GM12878 (cell line): ENCODE measurements at regions of chr7 and their contacts with region 1.

Region 1: GRCh38 chr7:139075031-139075652 is 34.4 kb downstream of the ZC3HAV1 start:
- DNase-seq: peak; percentile 45
- ATAC-seq: peak; percentile 98
- H3K4me3 ChIP-seq: no peak overlapping the region
- H3K27ac ChIP-seq: no peak overlapping the region; the same call in 1 of the 2 replicates
- H3K4me1 ChIP-seq: peaks cover 7% of the 10 kb centered on the region; the same call in 1 of the 2 replicates
- H3K27me3 ChIP-seq: no peaks in the 10 kb centered on the region
- CTCF ChIP-seq: peak; percentile 68 to 85 (median 79)
- EP300 ChIP-seq: no peak
- POLR2A ChIP-seq: no peak
- RAD21 ChIP-seq: peak; percentile 72

Region 2: GRCh38 chr7:138886501-138886917 is 188.6 kb before region 1 on chr7:
- CTCF ChIA-PET with region 1: interaction called, 57 read pairs
- POLR2A ChIA-PET with region 1: no interaction called
- RAD21 ChIA-PET with region 1: interaction called, 41 read pairs
- SMC1A ChIA-PET with region 1: interaction called, 17 read pairs
- in situ Hi-C with region 1: loop called (anchors 5 kb)
- intact Hi-C with region 1: loop called (anchors 1 kb)
- DNase-seq: peak; percentile 42
- ATAC-seq: peak; percentile 95
- H3K4me3 ChIP-seq: no peak overlapping the region
- H3K27ac ChIP-seq: peak overlapping the region; percentile 18; the same call in 1 of the 2 replicates
- H3K4me1 ChIP-seq: no peaks in the 10 kb centered on the region
- H3K27me3 ChIP-seq: no peaks in the 10 kb centered on the region
- CTCF ChIP-seq: peak; percentile 60 to 78 (median 73)
- EP300 ChIP-seq: no peak
- POLR2A ChIP-seq: no peak
- RAD21 ChIP-seq: peak; percentile 66

Region 3: GRCh38 chr7:139023076-139023475 is 52.1 kb before region 1 on chr7:
- CTCF ChIA-PET with region 1: interaction called, 57 read pairs
- POLR2A ChIA-PET with region 1: no interaction called
- RAD21 ChIA-PET with region 1: interaction called, 27 read pairs
- SMC1A ChIA-PET with region 1: interaction called, 15 read pairs
- in situ Hi-C with region 1: no loop called
- intact Hi-C with region 1: no loop called
- DNase-seq: no peak
- ATAC-seq: no peak
- H3K4me3 ChIP-seq: no peak overlapping the region
- H3K27ac ChIP-seq: no peak overlapping the region
- H3K4me1 ChIP-seq: no peaks in the 10 kb centered on the region
- H3K27me3 ChIP-seq: no peaks in the 10 kb centered on the region
- CTCF ChIP-seq: no peak
- EP300 ChIP-seq: no peak
- POLR2A ChIP-seq: no peak
- RAD21 ChIP-seq: no peak

Region 4: DNA sequence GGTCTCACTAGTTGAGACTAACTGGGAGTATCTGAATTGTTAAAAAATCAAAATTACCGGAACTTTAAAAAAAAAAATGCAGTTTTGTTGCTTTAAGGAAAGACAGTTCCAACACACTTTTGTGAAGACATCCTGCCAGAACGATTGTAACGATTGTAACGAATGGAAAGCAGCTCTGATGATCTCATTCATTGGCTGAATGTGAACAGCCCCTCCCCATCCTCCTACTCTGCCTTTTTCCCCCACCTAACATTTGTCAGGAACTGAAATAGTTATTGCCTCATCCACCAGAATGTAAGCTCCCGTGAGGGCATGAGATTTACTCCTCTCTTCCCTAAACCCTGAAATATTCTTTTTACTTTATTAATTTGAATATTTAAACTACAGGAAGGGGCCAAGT is 16.2 kb before region 1 on chr7:
- CTCF ChIA-PET with region 1: interaction called, 20 read pairs
- POLR2A ChIA-PET with region 1: no interaction called
- RAD21 ChIA-PET with region 1: no interaction called
- SMC1A ChIA-PET with region 1: interaction called, 4 read pairs
- in situ Hi-C with region 1: no loop called
- intact Hi-C with region 1: no loop called
- DNase-seq: no peak
- ATAC-seq: no peak
- H3K4me3 ChIP-seq: no peak overlapping the region
- H3K27ac ChIP-seq: no peak overlapping the region
- H3K4me1 ChIP-seq: no peaks in the 10 kb centered on the region
- H3K27me3 ChIP-seq: no peaks in the 10 kb centered on the region
- CTCF ChIP-seq: no peak
- EP300 ChIP-seq: no peak
- POLR2A ChIP-seq: no peak
- RAD21 ChIP-seq: no peak

Region 5: GRCh38 chr7:139095194-139095659 is 20.1 kb after region 1 on chr7:
- CTCF ChIA-PET with region 1: interaction called, 34 read pairs
- POLR2A ChIA-PET with region 1: interaction called, 9 read pairs
- RAD21 ChIA-PET with region 1: interaction called, 6 read pairs
- SMC1A ChIA-PET with region 1: interaction called, 16 read pairs
- in situ Hi-C with region 1: no loop called
- intact Hi-C with region 1: no loop called
- DNase-seq: peak; percentile 88
- ATAC-seq: peak; percentile 99
- H3K4me3 ChIP-seq: peak overlapping the region; percentile 65
- H3K27ac ChIP-seq: peak overlapping the region; percentile 70
- H3K4me1 ChIP-seq: peaks cover 20% of the 10 kb centered on the region
- H3K27me3 ChIP-seq: no peaks in the 10 kb centered on the region
- CTCF ChIP-seq: 0 out of 6 replicates have a peak, but pooled peaks of 2 of the 3 experiments have one; percentile 2 to 5
- EP300 ChIP-seq: peak in 1 of 2 experiments; percentile 38; a peak in 1 of 4 replicates
- POLR2A ChIP-seq: peak; percentile 74
- RAD21 ChIP-seq: no peak

Region 6: DNA sequence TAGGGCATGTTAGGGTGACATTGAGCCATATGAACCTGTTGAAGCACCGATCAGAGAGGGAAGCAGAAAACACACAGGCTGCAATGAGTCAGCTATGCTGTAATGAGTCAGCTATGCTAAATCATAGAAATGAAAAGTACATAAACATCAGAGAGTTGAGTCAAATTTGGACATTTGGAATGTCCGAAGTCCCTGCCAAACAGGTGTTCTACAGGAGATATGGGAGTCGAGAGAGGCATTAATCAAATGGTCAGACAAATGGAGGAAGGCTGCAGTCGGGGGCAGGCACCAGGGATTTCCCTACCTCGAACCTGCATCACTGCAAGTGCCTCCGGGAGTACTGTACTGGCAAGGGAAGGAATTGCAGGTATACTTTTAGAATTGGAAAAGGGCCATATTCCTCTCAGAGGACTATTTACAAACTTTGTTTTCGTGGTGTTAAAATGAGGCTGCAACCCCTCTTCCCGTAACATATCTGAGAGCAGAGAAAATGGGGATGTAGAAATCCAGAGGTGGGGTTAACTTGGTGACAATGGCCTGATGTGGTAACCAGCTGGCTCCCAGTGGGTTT is 43.2 kb after region 1 on chr7:
- CTCF ChIA-PET with region 1: interaction called, 12 read pairs
- POLR2A ChIA-PET with region 1: no interaction called
- RAD21 ChIA-PET with region 1: interaction called, 3 read pairs
- SMC1A ChIA-PET with region 1: interaction called, 5 read pairs
- in situ Hi-C with region 1: no loop called
- intact Hi-C with region 1: no loop called
- DNase-seq: peak; percentile 80
- ATAC-seq: peak; percentile 83
- H3K4me3 ChIP-seq: peak overlapping the region; percentile 46; the same call in 1 of the 2 replicates
- H3K27ac ChIP-seq: peak overlapping the region; percentile 64
- H3K4me1 ChIP-seq: peaks cover 25% of the 10 kb centered on the region
- H3K27me3 ChIP-seq: no peaks in the 10 kb centered on the region
- CTCF ChIP-seq: peak in 2 of 3 experiments; percentile 17 to 27; a peak in 3 of 6 replicates
- EP300 ChIP-seq: peak; percentile 87 to 89; a peak in 2 of 4 replicates
- POLR2A ChIP-seq: no peak
- RAD21 ChIP-seq: no peak

Region 7: GRCh38 chr7:139169801-139170200 is 94.7 kb after region 1 on chr7:
- CTCF ChIA-PET with region 1: no interaction called
- POLR2A ChIA-PET with region 1: no interaction called
- RAD21 ChIA-PET with region 1: no interaction called
- SMC1A ChIA-PET with region 1: no interaction called
- in situ Hi-C with region 1: no loop called
- intact Hi-C with region 1: no loop called
- DNase-seq: no peak
- ATAC-seq: no peak
- H3K4me3 ChIP-seq: no peak overlapping the region
- H3K27ac ChIP-seq: no peak overlapping the region
- H3K4me1 ChIP-seq: no peaks in the 10 kb centered on the region
- H3K27me3 ChIP-seq: no peaks in the 10 kb centered on the region
- CTCF ChIP-seq: no peak
- EP300 ChIP-seq: no peak
- POLR2A ChIP-seq: no peak
- RAD21 ChIP-seq: no peak

Region 8: DNA sequence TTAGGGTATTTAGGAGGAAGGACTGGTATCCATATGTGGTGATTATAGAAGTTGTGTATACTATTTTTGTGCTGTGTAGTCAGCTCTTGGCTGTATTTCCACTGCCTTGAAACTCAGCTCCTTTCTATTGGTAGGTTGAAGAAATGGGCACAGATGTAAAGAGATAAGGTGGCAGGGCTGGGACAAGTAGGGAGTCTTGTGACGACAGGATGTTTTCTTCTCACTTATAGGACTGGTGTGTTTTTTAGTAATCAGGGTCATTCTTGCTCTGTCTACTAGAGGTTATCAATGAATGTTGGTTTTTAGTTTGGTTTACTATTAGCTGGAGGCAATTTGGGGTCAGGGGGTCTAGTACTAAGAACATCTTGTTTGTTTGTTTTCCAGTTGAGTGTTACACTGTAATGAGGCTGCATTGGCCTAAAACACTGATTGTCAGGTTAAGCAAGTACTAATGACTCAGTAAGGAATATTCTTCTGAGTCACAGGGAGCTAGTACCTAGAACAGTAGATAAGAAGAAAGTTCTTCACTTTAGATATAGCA is 167.7 kb after region 1 on chr7:
- CTCF ChIA-PET with region 1: no interaction called
- POLR2A ChIA-PET with region 1: no interaction called
- RAD21 ChIA-PET with region 1: no interaction called
- SMC1A ChIA-PET with region 1: no interaction called
- in situ Hi-C with region 1: no loop called
- intact Hi-C with region 1: no loop called
- DNase-seq: no peak
- ATAC-seq: no peak
- H3K4me3 ChIP-seq: no peak overlapping the region
- H3K27ac ChIP-seq: no peak overlapping the region
- H3K4me1 ChIP-seq: no peaks in the 10 kb centered on the region
- H3K27me3 ChIP-seq: no peaks in the 10 kb centered on the region
- CTCF ChIP-seq: no peak
- EP300 ChIP-seq: no peak
- POLR2A ChIP-seq: no peak
- RAD21 ChIP-seq: no peak